GM12878 (cell line): ENCODE measurements at regions of chr18 and their contacts with region 1.

Region 1: GRCh38 chr18:3995476-3996102 is 459.5 kb downstream of the DLGAP1 start:
- DNase-seq: peak; percentile 38
- ATAC-seq: peak; percentile 85
- H3K4me3 ChIP-seq: no peak overlapping the region
- H3K27ac ChIP-seq: no peak overlapping the region
- H3K4me1 ChIP-seq: no peaks in the 10 kb centered on the region
- H3K27me3 ChIP-seq: no peaks in the 10 kb centered on the region
- CTCF ChIP-seq: peak; percentile 75 to 76 (median 75); a peak in 5 of 6 replicates
- EP300 ChIP-seq: no peak
- POLR2A ChIP-seq: no peak
- RAD21 ChIP-seq: peak; percentile 61

Region 2: DNA sequence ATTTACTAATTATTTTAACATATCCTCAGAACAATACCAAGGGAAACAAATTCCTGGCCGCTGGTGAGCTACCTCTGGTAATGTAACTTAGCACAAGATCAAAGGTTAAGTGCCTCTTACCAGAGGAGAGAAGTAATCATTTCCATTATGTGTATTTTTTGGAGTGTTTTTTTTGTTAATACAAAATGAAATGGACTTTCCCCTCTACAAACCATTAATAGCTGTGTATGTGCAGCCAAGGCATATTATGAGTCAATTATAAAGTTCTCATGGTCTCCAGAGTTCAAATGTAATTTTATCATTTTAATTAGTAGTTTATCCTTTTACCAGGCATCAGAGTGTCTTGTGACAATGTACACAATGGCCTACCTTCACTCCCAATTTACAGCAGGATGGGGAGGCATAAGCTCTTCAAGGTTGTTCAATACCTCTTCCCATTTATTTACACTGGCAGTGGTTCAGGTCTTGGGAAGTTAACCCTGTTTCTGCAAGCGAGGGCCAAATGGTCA is 303.4 kb before region 1 on chr18:
- CTCF ChIA-PET with region 1: interaction called, 13 read pairs
- POLR2A ChIA-PET with region 1: no interaction called
- RAD21 ChIA-PET with region 1: no interaction called
- SMC1A ChIA-PET with region 1: interaction called, 5 read pairs
- in situ Hi-C with region 1: no loop called
- intact Hi-C with region 1: no loop called
- DNase-seq: no peak
- ATAC-seq: peak; percentile 59
- H3K4me3 ChIP-seq: no peak overlapping the region
- H3K27ac ChIP-seq: no peak overlapping the region
- H3K4me1 ChIP-seq: no peaks in the 10 kb centered on the region
- H3K27me3 ChIP-seq: no peaks in the 10 kb centered on the region
- CTCF ChIP-seq: no peak
- EP300 ChIP-seq: no peak
- POLR2A ChIP-seq: no peak
- RAD21 ChIP-seq: no peak

Region 3: DNA sequence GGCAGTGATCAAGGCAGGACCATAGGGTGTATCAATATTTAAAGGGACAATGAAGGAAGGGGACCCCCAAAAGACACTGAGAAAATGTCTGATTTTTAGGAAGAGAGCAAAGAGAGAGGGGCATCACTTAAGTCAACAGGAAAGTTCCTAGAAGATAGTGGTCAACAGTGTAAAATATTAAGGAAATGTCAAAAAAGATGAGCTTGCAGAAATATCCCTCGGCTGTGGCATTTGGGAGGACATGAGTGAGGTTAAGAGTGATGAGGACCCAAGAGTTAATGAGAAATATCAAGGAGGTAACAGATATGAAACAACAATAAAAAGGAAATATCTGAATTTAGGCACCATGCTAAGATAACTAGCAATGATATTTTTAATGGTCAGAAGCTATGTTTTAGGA is 206.1 kb before region 1 on chr18:
- CTCF ChIA-PET with region 1: interaction called, 11 read pairs
- POLR2A ChIA-PET with region 1: no interaction called
- RAD21 ChIA-PET with region 1: no interaction called
- SMC1A ChIA-PET with region 1: interaction called, 4 read pairs
- in situ Hi-C with region 1: no loop called
- intact Hi-C with region 1: no loop called
- DNase-seq: no peak
- ATAC-seq: no peak
- H3K4me3 ChIP-seq: no peak overlapping the region
- H3K27ac ChIP-seq: no peak overlapping the region
- H3K4me1 ChIP-seq: no peaks in the 10 kb centered on the region
- H3K27me3 ChIP-seq: no peaks in the 10 kb centered on the region
- CTCF ChIP-seq: no peak
- EP300 ChIP-seq: no peak
- POLR2A ChIP-seq: no peak
- RAD21 ChIP-seq: no peak

Region 4: GRCh38 chr18:3869848-3870247 is 125.7 kb before region 1 on chr18:
- CTCF ChIA-PET with region 1: interaction called, 14 read pairs
- POLR2A ChIA-PET with region 1: interaction called, 3 read pairs
- RAD21 ChIA-PET with region 1: interaction called, 3 read pairs
- SMC1A ChIA-PET with region 1: interaction called, 16 read pairs
- in situ Hi-C with region 1: no loop called
- intact Hi-C with region 1: no loop called
- DNase-seq: no peak
- ATAC-seq: peak; percentile 44; the same call in 2 of the 3 replicates
- H3K4me3 ChIP-seq: no peak overlapping the region
- H3K27ac ChIP-seq: no peak overlapping the region
- H3K4me1 ChIP-seq: no peaks in the 10 kb centered on the region
- H3K27me3 ChIP-seq: no peaks in the 10 kb centered on the region
- CTCF ChIP-seq: peak in 1 of 3 experiments; percentile 33; a peak in 1 of 6 replicates
- EP300 ChIP-seq: no peak
- POLR2A ChIP-seq: no peak
- RAD21 ChIP-seq: peak; percentile 46

Region 5: DNA sequence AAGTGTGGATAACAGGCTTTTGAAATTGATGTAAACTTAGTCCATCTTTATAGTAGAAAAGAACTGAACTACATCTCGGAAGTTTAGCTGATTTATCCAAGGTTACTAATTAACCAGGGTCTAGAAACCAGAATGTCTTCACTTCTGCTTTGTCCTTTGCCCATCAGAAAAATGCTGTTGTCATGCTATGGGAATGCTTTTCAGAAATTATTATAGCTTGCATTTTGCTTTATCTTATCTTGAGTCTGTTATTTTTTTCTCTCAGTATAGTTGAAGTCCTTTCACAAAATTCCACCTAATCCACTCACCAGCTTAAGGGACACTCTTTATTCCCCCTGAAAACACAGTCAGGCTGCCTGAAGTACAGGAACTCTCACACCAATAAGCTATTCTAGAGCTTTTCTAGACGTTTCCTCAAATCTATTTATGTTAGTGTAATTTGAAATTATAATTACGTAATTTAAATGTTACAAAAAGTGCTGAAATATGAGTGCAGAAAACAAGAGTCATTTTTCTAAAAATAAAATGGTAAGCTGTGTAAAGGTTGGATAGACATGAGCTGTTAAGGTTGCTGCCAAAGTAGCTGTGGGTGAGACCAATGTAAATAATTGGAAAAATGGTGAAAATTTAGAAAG is 89.4 kb before region 1 on chr18:
- CTCF ChIA-PET with region 1: interaction called, 8 read pairs
- POLR2A ChIA-PET with region 1: no interaction called
- RAD21 ChIA-PET with region 1: interaction called, 11 read pairs
- SMC1A ChIA-PET with region 1: interaction called, 4 read pairs
- in situ Hi-C with region 1: no loop called
- intact Hi-C with region 1: no loop called
- DNase-seq: peak; percentile 11
- ATAC-seq: peak; percentile 82
- H3K4me3 ChIP-seq: no peak overlapping the region
- H3K27ac ChIP-seq: no peak overlapping the region
- H3K4me1 ChIP-seq: no peaks in the 10 kb centered on the region
- H3K27me3 ChIP-seq: no peaks in the 10 kb centered on the region
- CTCF ChIP-seq: no peak
- EP300 ChIP-seq: no peak; a peak in 1 of 4 replicates
- POLR2A ChIP-seq: no peak
- RAD21 ChIP-seq: no peak

Region 6: DNA sequence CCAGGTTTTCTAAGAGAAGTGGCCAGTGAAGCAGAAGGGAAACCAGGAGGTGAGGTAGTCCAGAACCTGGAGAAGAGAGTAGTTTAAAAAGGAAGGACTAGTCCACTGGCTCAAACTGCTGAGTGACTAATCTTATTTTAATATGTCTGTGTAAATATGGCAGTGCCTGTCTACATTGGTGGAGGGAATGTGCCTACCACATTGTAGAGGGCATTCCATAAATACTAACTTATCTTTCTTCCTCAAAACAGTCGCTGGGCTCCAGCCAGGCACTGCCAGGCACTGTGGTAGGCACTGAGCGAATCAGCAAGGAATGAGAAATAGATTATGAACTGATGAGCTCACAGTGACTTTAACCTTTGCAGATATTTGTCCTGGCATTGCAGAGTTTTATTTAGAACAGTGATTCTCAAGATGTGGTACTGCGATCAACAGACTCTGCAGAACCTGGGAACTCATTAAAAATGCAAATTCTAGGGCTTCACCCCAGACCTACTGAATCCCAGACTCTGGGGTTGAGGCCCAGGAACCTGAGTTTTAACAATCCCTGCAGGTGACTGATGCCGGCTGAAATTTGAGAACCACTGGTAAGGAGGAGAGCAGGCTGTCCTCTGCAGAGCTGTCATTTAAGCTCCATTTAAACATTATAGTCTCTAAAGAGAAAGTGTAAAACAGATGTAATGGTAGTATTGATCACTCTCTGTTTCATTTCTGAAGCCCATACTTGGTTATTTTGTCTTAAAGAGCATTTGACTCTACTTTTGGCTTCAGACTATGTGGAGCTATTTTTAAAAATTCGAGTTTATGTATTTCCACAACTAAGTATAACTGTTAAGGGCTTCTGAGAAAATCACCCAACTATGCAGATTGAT is 28.4 kb before region 1 on chr18:
- CTCF ChIA-PET with region 1: interaction called, 11 read pairs
- POLR2A ChIA-PET with region 1: no interaction called
- RAD21 ChIA-PET with region 1: interaction called, 10 read pairs
- SMC1A ChIA-PET with region 1: interaction called, 13 read pairs
- in situ Hi-C with region 1: no loop called
- intact Hi-C with region 1: no loop called
- DNase-seq: no peak
- ATAC-seq: peak; percentile 66
- H3K4me3 ChIP-seq: no peak overlapping the region
- H3K27ac ChIP-seq: no peak overlapping the region
- H3K4me1 ChIP-seq: no peaks in the 10 kb centered on the region
- H3K27me3 ChIP-seq: no peaks in the 10 kb centered on the region
- CTCF ChIP-seq: no peak
- EP300 ChIP-seq: no peak
- POLR2A ChIP-seq: no peak
- RAD21 ChIP-seq: no peak

Region 7: DNA sequence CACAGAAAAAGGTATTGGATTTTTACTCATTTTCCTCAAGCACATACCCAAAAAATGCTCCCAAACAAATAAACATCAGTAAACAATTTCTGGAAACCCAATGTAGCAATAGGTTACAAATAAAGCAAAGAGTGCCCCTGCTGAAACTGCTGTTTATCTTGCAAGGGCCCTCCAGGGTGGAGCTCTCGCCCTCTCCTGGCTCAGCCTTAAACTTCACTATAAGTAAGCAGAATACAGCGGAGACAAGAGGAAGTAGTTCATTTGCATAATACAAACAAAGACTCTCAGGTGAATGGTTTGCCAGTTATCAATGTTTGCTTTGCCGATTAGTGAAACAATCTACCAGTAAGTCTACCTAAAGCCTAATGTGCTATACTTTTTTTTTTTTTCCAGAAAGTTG is 21.9 kb after region 1 on chr18:
- CTCF ChIA-PET with region 1: interaction called, 10 read pairs
- POLR2A ChIA-PET with region 1: no interaction called
- RAD21 ChIA-PET with region 1: no interaction called
- SMC1A ChIA-PET with region 1: interaction called, 6 read pairs
- in situ Hi-C with region 1: no loop called
- intact Hi-C with region 1: no loop called
- DNase-seq: no peak
- ATAC-seq: peak; percentile 79
- H3K4me3 ChIP-seq: no peak overlapping the region
- H3K27ac ChIP-seq: no peak overlapping the region
- H3K4me1 ChIP-seq: no peaks in the 10 kb centered on the region
- H3K27me3 ChIP-seq: no peaks in the 10 kb centered on the region
- CTCF ChIP-seq: peak in 2 of 3 experiments; percentile 22 to 35; a peak in 3 of 6 replicates
- EP300 ChIP-seq: no peak
- POLR2A ChIP-seq: no peak
- RAD21 ChIP-seq: no peak